Esophagus squamous epithelium (tissue), 5 donors: ENCODE measurements at regions of chr6 and their contacts with region 1.

Region 1: GRCh38 chr6:90296346-90297114 is at the start of gene BACH2:
- DNase-seq: peak; percentile 75
- H3K4me3 ChIP-seq: peak within 1 kb of the TSS; percentile 67 to 92 (median 78)
- H3K27ac ChIP-seq: peak within 1 kb of the TSS; percentile 84 to 93 (median 88)
- H3K4me1 ChIP-seq: peaks cover 6 to 26% (median 10%) of the 10 kb centered on the region in 3 donors
- H3K27me3 ChIP-seq: peaks cover 0 to 33% (median 0%) of the 10 kb centered on the region in 4 donors
- CTCF ChIP-seq: peak in 2 of 6 experiments; percentile 39 to 42
- POLR2A ChIP-seq: peak in 2 of 4 donors; percentile 63 to 78
- total RNA-seq, gene BACH2: 0.22 to 6.1 (median 0.66) TPM

Region 2: DNA sequence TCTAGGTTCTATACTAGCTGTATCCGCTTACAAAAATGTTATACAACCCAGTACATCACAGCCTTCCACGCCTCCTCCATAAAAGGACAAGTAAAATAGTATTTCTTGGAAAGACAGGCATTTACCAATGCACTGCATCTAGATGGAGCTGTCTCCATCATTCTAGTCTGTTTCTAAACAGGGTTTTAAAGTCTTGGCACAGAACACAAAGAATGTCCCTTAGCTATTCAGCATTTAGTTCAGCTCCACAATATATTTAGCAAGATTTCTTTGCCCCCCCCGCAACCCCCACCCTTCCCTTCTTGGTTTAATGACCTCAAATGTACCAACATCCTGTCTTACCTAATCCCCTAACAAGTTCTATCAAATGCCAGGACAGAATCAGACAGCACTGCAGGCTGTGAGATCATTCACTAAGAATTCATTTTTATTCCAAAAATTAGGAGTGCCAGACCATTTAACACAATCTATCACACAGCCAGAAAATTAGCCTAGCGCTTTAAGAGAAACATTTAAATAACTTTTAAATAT is 198.5 kb before region 1 on chr6:
- intact Hi-C with region 1: loop called (anchors 10 kb)
- DNase-seq: no peak
- H3K4me3 ChIP-seq: no peak overlapping the region
- H3K27ac ChIP-seq: peak overlapping the region; percentile 49 to 83 (median 78)
- H3K4me1 ChIP-seq: peaks cover 8 to 26% (median 18%) of the 10 kb centered on the region in 3 donors
- H3K27me3 ChIP-seq: no peaks in the 10 kb centered on the region
- CTCF ChIP-seq: peak in 4 of 6 experiments; percentile 16 to 36 (median 24)
- POLR2A ChIP-seq: no peak

Region 3: GRCh38 chr6:90383196-90383822 is 86.8 kb after region 1 on chr6:
- intact Hi-C with region 1: loop called (anchors 10 kb)
- DNase-seq: no peak
- H3K4me3 ChIP-seq: no peak overlapping the region
- H3K27ac ChIP-seq: no peak overlapping the region
- H3K4me1 ChIP-seq: no peaks in the 10 kb centered on the region
- H3K27me3 ChIP-seq: peaks cover 0 to 21% (median 0%) of the 10 kb centered on the region in 4 donors
- CTCF ChIP-seq: no peak
- POLR2A ChIP-seq: no peak

Region 4: DNA sequence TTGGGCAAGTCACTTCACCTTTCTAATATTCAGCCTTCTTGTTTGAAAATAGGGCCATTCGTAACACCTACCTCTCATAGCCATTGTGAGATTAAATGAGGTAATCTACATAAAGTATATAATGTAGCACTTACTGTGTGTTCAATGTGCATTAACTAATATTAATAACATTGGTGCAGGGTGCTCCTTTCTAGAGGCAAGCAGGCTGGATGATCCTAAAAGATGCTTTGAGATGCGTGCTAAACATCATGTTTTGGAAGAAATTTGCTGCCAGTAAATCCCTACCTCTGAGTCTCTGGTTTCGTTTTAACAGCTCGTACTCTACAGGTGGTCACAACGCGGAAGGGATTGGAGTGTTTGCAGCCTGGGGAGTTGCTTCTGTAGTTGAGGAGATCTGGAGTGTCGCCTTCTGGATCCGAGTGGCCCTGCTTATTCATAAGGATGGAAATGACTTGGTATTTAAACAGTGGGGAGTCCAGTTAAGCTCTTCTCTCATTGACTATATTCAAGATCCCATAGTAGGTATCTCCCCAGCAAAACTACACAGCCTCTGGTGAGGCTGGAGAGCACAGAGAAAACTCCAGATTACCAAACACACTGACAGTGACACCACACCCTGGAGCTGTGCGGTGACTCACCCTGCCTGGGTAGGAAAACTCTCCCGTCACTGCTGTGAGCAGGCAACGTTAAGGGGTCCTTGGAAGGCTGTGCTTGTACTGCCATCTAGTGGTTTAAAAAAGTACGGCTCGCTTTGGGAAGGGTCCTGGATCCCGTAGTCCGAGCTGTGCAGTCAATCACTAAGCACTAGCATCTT is 182.5 kb after region 1 on chr6:
- intact Hi-C with region 1: loop called (anchors 10 kb)
- DNase-seq: no peak
- H3K4me3 ChIP-seq: no peak overlapping the region
- H3K27ac ChIP-seq: peak overlapping the region in 1 of 4 donors; percentile 36
- H3K4me1 ChIP-seq: peaks cover 0 to 25% (median 4%) of the 10 kb centered on the region in 3 donors
- H3K27me3 ChIP-seq: no peaks in the 10 kb centered on the region
- CTCF ChIP-seq: peak; percentile 81 to 93 (median 92)
- POLR2A ChIP-seq: no peak

Region 5: DNA sequence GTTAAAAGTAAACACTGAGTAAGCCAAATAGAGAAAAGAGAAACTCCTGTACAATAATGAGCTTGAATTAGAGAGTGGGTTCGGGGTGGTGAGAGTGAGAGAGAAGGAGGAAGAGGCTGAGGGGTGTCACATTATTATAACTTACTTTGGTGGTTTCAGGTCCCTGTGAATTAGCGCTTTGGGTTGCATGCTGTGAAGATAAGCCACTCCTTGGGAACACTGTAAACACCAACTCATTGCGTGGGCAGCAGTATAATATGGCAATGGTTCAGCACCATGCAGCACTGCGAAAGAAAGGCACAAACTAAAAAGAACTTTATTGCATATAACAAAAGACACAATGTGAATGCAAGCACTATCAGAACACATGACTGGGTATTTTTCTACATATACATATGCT is 263.4 kb after region 1 on chr6:
- intact Hi-C with region 1: no loop called
- DNase-seq: no peak
- H3K4me3 ChIP-seq: no peak overlapping the region
- H3K27ac ChIP-seq: no peak overlapping the region
- H3K4me1 ChIP-seq: no peaks in the 10 kb centered on the region
- H3K27me3 ChIP-seq: no peaks in the 10 kb centered on the region
- CTCF ChIP-seq: no peak
- POLR2A ChIP-seq: no peak